ENCODE measurements at regions of chr13 and their contacts with region 1.

Region 1: DNA sequence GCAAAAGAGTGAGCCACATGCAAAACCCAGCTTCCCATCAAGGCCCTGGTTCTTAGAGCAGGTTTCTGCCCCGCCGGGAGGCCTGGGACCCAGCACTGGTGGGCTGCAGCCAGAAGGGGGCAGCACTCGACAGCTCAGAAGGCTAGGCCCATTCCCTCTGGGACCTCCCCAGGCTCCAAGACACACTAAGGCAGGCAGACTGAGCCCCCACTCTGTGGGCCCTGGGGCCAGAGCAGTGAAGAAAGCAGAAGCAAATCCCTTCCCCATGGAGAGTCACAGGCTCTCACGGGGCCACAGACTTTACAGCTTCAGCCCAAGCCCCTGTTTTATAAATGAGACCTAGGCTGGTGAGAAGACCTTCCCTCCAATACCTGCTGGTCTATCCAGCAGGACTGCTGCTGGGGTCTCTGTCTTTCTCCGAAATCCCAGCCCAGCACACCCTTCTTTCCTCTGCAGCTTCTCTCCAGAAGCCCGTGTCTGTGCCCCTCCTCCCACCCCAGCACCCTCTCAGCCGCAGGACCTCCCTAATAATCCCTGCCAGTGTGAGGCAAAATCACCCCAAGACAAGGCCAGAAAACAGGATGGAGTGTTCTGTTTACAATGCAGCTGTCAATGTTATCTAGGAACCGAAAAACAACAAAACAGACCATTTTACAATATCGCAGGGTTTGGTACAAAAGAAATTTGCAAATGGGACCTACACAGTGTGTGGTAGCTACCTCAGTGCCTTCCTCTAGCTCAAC is 109.3 kb downstream of the ABCC4 start:
- DNase-seq: peak; percentile 78
- H3K4me3 ChIP-seq: no peak overlapping the region
- H3K27ac ChIP-seq: no peak overlapping the region
- H3K4me1 ChIP-seq: no peaks in the 10 kb centered on the region
- H3K27me3 ChIP-seq: no peaks in the 10 kb centered on the region
- CTCF ChIP-seq: peak; percentile 90 to 97
- POLR2A ChIP-seq: no peak

Region 2: GRCh38 chr13:94579063-94579462 is 612.9 kb before region 1 on chr13:
- CTCF ChIA-PET with region 1: no interaction called
- POLR2A ChIA-PET with region 1: no interaction called
- dilution Hi-C with region 1: no loop called
- intact Hi-C with region 1: no loop called
- DNase-seq: no peak
- H3K4me3 ChIP-seq: no peak overlapping the region
- H3K27ac ChIP-seq: no peak overlapping the region
- H3K4me1 ChIP-seq: peaks cover 12% of the 10 kb centered on the region
- H3K27me3 ChIP-seq: no peaks in the 10 kb centered on the region
- CTCF ChIP-seq: no peak
- POLR2A ChIP-seq: no peak

Region 3: DNA sequence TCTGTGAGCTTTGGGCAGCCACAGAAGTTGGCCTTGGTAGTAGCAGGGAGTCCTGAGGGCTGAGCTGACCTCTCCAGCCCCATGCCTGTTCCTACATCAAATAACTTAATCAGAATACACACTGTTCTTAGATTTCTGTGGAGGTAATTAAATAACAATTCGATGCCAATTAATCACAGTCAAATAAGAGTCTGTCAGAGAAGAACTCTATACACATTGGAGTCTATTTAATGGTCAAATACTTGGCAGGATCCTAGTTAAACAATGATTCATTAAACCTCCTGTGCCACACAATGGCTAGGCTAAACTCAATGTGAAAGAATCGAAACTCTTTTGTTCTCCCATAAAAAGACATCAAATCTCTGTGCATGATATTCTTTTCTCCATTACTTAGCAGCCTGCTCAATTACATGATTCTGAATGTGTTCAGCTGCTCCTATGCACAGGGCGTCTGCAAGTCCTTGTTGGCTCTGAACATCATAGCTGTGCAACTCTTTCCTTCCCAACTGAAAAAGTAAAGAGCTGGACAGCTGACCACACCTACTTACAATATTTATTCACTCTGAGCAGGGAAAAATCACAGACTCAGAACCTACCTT is 63.8 kb before region 1 on chr13:
- CTCF ChIA-PET with region 1: no interaction called
- POLR2A ChIA-PET with region 1: no interaction called
- dilution Hi-C with region 1: no loop called
- intact Hi-C with region 1: no loop called
- DNase-seq: peak; percentile 76
- H3K4me3 ChIP-seq: no peak overlapping the region
- H3K27ac ChIP-seq: no peak overlapping the region
- H3K4me1 ChIP-seq: peaks cover 13% of the 10 kb centered on the region
- H3K27me3 ChIP-seq: no peaks in the 10 kb centered on the region
- CTCF ChIP-seq: no peak
- POLR2A ChIP-seq: no peak

Region 4: GRCh38 chr13:95146486-95146885 is 45.5 kb before region 1 on chr13:
- CTCF ChIA-PET with region 1: no interaction called
- POLR2A ChIA-PET with region 1: no interaction called
- dilution Hi-C with region 1: no loop called
- intact Hi-C with region 1: no loop called
- DNase-seq: no peak
- H3K4me3 ChIP-seq: no peak overlapping the region
- H3K27ac ChIP-seq: no peak overlapping the region
- H3K4me1 ChIP-seq: no peaks in the 10 kb centered on the region
- H3K27me3 ChIP-seq: no peaks in the 10 kb centered on the region
- CTCF ChIP-seq: no peak
- POLR2A ChIP-seq: no peak

Region 5: GRCh38 chr13:95201814-95202651 is 10.0 kb after region 1 on chr13:
- CTCF ChIA-PET with region 1: interaction called, 16 read pairs
- POLR2A ChIA-PET with region 1: no interaction called
- dilution Hi-C with region 1: no loop called
- intact Hi-C with region 1: no loop called
- DNase-seq: peak; percentile 80
- H3K4me3 ChIP-seq: no peak overlapping the region
- H3K27ac ChIP-seq: peak overlapping the region; percentile 52
- H3K4me1 ChIP-seq: peaks cover 23% of the 10 kb centered on the region
- H3K27me3 ChIP-seq: no peaks in the 10 kb centered on the region
- CTCF ChIP-seq: no peak
- POLR2A ChIP-seq: no peak

Region 6: DNA sequence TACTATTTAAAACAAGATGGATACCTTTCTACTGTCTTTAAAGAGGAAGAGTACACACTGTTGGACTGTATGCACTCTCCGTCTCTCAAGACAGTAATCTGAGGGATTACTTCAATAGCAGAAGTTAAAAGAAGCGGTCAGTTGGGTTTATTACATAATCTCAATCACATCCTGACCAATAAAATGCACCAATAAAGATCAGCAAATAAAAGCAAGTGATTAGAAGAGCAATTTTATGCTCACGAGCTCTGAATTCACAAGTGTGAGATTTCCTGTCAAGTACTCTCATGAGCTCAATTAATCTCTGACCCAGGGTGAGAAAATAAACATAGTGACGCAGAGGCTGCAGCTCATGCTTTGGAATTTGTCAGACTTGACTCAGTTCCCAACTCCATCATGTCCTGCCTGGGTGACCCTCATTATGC is 97.0 kb after region 1 on chr13:
- CTCF ChIA-PET with region 1: interaction called, 40 read pairs
- POLR2A ChIA-PET with region 1: no interaction called
- dilution Hi-C with region 1: no loop called
- intact Hi-C with region 1: no loop called
- DNase-seq: peak; percentile 89
- H3K4me3 ChIP-seq: no peak overlapping the region
- H3K27ac ChIP-seq: peak overlapping the region; percentile 78
- H3K4me1 ChIP-seq: peaks cover 11% of the 10 kb centered on the region
- H3K27me3 ChIP-seq: no peaks in the 10 kb centered on the region
- CTCF ChIP-seq: no peak
- POLR2A ChIP-seq: no peak

Region 7: GRCh38 chr13:95367309-95367843 is 175.4 kb after region 1 on chr13:
- CTCF ChIA-PET with region 1: interaction called, 10 read pairs
- POLR2A ChIA-PET with region 1: no interaction called
- dilution Hi-C with region 1: no loop called
- intact Hi-C with region 1: no loop called
- DNase-seq: no peak
- H3K4me3 ChIP-seq: no peak overlapping the region
- H3K27ac ChIP-seq: no peak overlapping the region
- H3K4me1 ChIP-seq: no peaks in the 10 kb centered on the region
- H3K27me3 ChIP-seq: peaks cover 0 to 1% of the 10 kb centered on the region in 2 experiments
- CTCF ChIP-seq: no peak
- POLR2A ChIP-seq: no peak

Region 8: GRCh38 chr13:95403828-95404522 is 212.0 kb after region 1 on chr13:
- CTCF ChIA-PET with region 1: interaction called, 633 read pairs
- POLR2A ChIA-PET with region 1: no interaction called
- dilution Hi-C with region 1: no loop called
- intact Hi-C with region 1: loop called (anchors 1 kb)
- DNase-seq: peak; percentile 78
- H3K4me3 ChIP-seq: peak overlapping the region in 2 of 3 experiments; percentile 0 to 18
- H3K27ac ChIP-seq: no peak overlapping the region
- H3K4me1 ChIP-seq: peaks cover 5% of the 10 kb centered on the region
- H3K27me3 ChIP-seq: no peaks in the 10 kb centered on the region
- CTCF ChIP-seq: peak; percentile 88 to 90
- POLR2A ChIP-seq: no peak

Region 9: DNA sequence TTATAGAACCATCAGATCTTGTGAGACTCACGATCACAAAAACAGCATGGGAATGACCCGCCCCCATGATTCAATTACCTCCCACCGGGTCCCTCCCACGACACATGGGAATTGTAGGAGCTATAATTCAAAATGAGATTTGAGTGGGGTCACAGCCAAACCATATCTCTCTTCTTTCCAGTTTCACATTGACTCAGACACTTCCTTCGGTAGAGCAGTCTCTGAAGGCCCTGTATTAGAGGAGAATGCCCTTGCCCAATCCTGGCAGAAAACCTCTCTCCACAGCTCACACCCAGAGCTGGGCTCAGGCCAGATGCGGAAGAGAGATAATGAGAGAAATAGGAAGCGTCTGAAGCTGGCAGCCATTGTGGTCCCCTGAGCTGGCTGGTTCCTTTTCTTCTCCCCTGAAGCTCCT is 288.1 kb after region 1 on chr13:
- CTCF ChIA-PET with region 1: interaction called, 30 read pairs
- POLR2A ChIA-PET with region 1: no interaction called
- dilution Hi-C with region 1: no loop called
- intact Hi-C with region 1: loop called (anchors 1 kb)
- DNase-seq: peak; percentile 65
- H3K4me3 ChIP-seq: no peak overlapping the region
- H3K27ac ChIP-seq: no peak overlapping the region
- H3K4me1 ChIP-seq: peaks cover 22% of the 10 kb centered on the region
- H3K27me3 ChIP-seq: no peaks in the 10 kb centered on the region
- CTCF ChIP-seq: no peak
- POLR2A ChIP-seq: no peak

Region 10: GRCh38 chr13:95858286-95859075 is 666.5 kb after region 1 on chr13:
- CTCF ChIA-PET with region 1: no interaction called
- POLR2A ChIA-PET with region 1: no interaction called
- dilution Hi-C with region 1: no loop called
- intact Hi-C with region 1: no loop called
- DNase-seq: peak; percentile 90
- H3K4me3 ChIP-seq: no peak overlapping the region
- H3K27ac ChIP-seq: peak overlapping the region; percentile 57
- H3K4me1 ChIP-seq: peaks cover 23% of the 10 kb centered on the region
- H3K27me3 ChIP-seq: no peaks in the 10 kb centered on the region
- CTCF ChIP-seq: no peak
- POLR2A ChIP-seq: no peak

Measured in endothelial cell of umbilical vein (primary cell).